ENCODE measurements at regions of chr1 and their contacts with region 1.

Region 1: GRCh38 chr1:231724876-231725724 is 98.5 kb downstream of the DISC1 start:
- DNase-seq: peak; percentile 40 to 79
- ATAC-seq: peak; percentile 88 to 98; a peak in 5 of 6 replicates
- H3K4me3 ChIP-seq: no peak overlapping the region
- H3K27ac ChIP-seq: no peak overlapping the region
- H3K4me1 ChIP-seq: no peaks in the 10 kb centered on the region
- CTCF ChIP-seq: peak; percentile 53
- EP300 ChIP-seq: no peak
- POLR2A ChIP-seq: no peak
- RAD21 ChIP-seq: peak; percentile 68 to 78

Region 2: DNA sequence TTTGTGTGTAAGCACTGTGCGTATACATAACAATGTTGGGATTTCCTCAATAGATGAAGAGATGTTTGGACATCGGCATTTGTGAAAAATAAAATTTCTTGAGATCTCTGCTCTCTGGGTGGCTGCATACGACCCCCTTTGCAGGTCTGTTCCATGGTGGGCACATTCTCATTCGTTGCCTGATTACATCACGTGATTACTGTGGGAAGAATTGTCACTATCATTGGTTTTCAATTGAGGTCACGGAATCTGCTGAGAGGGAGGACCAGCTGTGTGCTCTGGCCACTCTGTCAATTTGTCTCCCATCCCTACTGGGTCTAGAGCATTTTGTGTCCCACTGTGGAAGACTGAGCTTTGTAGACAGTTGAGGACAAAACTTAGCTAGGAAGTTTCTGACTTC is 16.7 kb before region 1 on chr1:
- CTCF ChIA-PET with region 1: interaction called, 10 read pairs
- POLR2A ChIA-PET with region 1: no interaction called
- DNase-seq: no peak
- ATAC-seq: no peak
- H3K4me3 ChIP-seq: no peak overlapping the region
- H3K27ac ChIP-seq: no peak overlapping the region
- H3K4me1 ChIP-seq: no peaks in the 10 kb centered on the region
- CTCF ChIP-seq: no peak
- EP300 ChIP-seq: no peak
- POLR2A ChIP-seq: no peak
- RAD21 ChIP-seq: no peak

Region 3: GRCh38 chr1:232038706-232039677 is 313.9 kb after region 1 on chr1:
- CTCF ChIA-PET with region 1: no interaction called
- POLR2A ChIA-PET with region 1: no interaction called
- DNase-seq: no peak
- ATAC-seq: no peak
- H3K4me3 ChIP-seq: no peak overlapping the region
- H3K27ac ChIP-seq: no peak overlapping the region
- H3K4me1 ChIP-seq: no peaks in the 10 kb centered on the region
- CTCF ChIP-seq: no peak
- EP300 ChIP-seq: no peak
- POLR2A ChIP-seq: no peak
- RAD21 ChIP-seq: no peak